Mammary epithelial cell (primary cell): ENCODE measurements at regions of chr1 and their contacts with region 1.

Region 1: DNA sequence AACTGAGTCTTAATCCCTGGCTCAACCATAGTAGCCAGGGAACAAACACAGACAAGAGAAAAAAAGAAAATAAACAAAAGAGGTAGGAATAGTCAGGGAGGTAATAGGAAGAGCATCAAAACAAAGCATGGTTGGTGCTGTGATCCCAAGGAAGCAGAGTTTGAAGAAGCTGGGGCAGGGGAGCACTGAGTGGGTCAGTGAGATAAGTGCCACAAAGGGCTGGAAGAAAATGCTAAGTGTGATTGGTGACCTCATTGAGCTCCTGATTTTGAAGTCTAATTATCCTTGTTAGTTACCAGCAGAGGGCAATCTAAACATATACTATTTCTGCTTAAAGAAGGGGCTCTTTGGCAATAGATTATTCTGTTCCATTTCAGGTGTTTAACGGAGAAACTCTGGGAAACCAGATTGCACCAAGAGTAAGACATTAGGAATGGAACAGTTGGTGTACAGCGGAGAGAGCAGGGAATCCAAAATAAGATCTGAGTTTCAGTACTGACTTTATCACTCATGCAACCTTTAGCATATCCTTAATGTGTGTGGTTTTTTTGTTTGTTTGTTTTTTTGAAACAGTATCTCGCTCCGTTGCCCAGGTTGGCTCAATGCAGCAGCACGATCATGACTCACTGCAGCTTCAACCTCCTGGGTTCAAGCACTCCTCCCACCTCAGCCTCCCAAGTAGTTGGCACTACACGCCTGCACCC is 30.7 kb upstream of the KIAA1614 start:
- DNase-seq: peak; percentile 16
- H3K4me3 ChIP-seq: no peak overlapping the region
- H3K27ac ChIP-seq: no peak overlapping the region
- H3K4me1 ChIP-seq: no peaks in the 10 kb centered on the region
- H3K27me3 ChIP-seq: no peaks in the 10 kb centered on the region
- CTCF ChIP-seq: peak; percentile 33 to 44

Region 2: DNA sequence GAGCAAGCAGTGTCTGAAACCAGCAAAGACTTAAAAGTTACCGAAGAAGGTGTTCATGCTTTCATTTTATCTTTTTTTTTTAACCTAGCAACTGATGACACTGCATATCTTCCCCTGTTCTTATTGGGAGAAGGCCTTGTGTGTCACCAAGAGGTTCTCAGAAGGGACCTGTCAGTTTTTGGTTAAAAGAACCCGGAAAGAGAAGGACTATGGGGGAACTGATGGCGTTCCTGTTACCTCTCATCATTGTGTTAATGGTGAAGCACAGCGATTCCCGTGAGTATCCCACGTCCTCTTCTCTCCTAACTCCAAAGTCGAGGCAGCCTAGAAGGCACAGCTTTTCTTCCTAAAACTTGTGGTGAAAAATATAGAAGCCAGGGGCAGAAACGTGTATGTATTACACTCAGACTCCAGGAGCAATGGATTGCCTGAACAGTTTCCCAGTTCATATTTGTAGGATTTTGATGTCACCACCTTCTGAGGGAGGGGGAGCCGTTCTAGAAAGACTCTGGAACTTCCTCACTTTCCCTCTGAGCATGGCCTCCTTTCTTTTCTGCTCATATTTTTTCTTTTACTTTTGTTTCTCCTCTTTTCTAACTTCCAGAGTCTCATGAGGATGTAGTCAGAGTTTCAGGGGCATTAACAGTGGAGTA is 152.0 kb after region 1 on chr1 and contains the start of gene MR1:
- CTCF ChIA-PET with region 1: no interaction called
- dilution Hi-C with region 1: no loop called
- in situ Hi-C with region 1: no loop called
- intact Hi-C with region 1: loop called (anchors 5 kb)
- DNase-seq: peak; percentile 86
- H3K4me3 ChIP-seq: peak within 1 kb of the TSS; percentile 61 to 62 (median 62)
- H3K27ac ChIP-seq: peak within 1 kb of the TSS; percentile 94
- H3K4me1 ChIP-seq: peaks cover 21% of the 10 kb centered on the region
- H3K27me3 ChIP-seq: no peaks in the 10 kb centered on the region
- CTCF ChIP-seq: no peak
- total RNA-seq, gene MR1: 20.4 to 46.3 TPM

Region 3: DNA sequence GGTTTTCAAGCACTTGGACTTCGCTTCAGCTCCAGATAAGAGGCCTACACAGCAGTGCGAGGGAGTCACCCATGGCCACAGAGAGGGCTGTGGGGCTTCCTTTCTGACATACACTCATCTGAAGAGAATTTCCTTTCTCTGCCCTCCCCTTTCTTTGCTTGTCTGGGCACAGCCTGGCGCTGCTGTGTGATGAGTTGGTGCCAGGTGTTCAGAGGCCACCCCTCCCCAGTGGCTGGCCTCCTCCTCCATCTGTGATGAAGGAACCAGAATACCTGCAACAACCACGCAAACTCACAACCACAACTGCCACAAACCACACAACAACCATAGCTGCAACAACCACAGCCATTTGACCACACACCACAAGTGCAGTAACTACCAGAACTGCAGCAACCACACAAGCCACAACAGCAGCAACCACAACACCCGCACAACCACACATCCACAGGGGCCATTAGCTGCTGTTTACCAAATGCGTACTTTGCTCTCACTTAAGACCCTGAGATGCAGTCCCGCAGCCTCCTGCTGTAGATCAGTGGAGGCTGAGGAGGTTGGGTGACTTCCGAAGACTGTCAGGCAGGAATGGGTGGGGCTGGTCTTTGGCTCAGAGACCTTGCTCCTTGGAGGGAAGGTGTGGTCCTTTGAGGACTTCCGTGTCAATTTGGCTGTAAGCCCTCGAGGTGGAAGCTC is 277.6 kb after region 1 on chr1:
- CTCF ChIA-PET with region 1: interaction called, 4 read pairs
- dilution Hi-C with region 1: no loop called
- in situ Hi-C with region 1: loop called in 1 of 2 experiments (anchors 5 kb)
- intact Hi-C with region 1: no loop called
- DNase-seq: peak; percentile 97
- H3K4me3 ChIP-seq: no peak overlapping the region
- H3K27ac ChIP-seq: peak overlapping the region; percentile 65
- H3K4me1 ChIP-seq: peaks cover 22% of the 10 kb centered on the region
- H3K27me3 ChIP-seq: no peaks in the 10 kb centered on the region
- CTCF ChIP-seq: no peak